ENCODE measurements at regions of chr7 and their contacts with region 1.

Region 1: DNA sequence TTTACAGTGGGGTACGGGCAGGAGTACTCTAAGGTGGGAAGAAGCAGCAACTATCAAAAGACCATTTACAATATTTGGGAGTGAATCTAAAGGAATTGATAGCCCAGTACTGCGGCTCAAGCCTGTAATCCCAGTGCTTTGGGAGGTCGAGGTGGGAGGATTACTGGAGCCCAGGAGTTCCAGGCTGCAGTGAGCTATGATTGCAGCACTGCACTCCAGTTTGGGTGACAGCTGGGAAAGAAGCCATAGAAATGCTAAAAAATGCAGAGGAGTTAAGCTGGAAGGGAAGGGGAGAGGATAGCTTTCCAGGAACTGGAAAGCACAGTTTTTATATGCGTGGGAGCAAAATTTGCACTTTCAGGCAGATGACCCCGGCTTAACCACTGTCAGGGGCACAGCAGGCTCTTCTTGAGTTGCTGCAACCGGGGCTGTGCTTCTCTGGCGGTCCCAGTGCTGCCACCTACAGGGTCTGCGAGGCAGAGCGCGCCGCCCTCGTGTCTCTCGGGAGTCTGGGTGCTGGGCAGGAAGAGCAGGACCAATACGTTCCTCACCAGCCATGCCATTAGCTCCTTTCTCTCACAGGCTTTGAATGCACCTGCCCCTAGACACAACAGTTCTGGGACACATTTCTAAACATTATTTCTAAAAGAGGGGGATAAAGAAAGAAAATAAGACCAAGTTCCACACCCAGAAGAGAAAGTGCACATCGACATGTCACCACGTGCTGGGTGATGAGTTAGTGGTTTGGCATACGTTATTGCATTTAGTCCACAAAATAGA is 10.1 kb upstream of the BMPER start:
- DNase-seq: peak; percentile 74 to 95 (median 90)

Region 2: GRCh38 chr7:33757562-33758165 is 137.6 kb before region 1 on chr7:
- intact Hi-C with region 1: loop called (anchors 5 kb)
- DNase-seq: peak in 27 of 42 donors; percentile 9 to 86 (median 53)

Region 3: DNA sequence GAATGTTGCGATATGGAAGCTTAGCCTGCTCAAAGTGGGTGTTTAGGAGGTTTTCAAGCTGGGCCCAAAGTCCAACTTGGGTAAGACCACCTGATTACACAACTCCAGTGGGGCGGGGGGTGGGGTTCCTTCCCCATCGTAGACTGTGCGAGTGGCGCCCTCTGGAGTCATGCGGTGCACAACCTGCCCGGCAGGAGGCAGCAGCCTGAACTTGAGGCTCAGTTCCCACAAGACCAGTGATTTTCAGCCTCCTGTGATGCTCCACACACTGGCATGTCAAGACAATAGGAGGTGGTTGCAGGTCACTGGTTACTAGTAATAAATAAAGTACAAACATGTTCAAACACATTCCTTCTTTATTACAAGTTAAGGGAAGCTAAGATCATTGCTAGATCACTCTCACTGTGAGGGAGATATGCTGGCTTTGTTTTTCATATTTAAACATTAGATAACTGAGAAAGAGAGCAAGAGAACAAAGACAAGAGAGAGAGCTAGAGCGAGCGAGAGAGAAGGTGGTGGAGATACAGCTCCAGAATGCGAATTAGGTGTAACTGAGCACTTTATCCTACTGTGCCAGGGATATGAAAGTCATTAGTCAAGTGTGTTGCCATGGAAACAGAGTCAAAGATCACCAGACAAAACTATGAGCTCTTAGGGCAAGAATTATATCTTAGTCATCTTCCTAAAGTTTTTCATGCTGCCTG is 87.3 kb before region 1 on chr7:
- intact Hi-C with region 1: no loop called
- DNase-seq: peak in 12 of 42 donors; percentile 5 to 55 (median 30)